ENCODE measurements at regions of chr22 and their contacts with region 1.

Region 1: GRCh38 chr22:19730655-19731360 is 7.5 kb downstream of the GP1BB start:
- DNase-seq: peak; percentile 90

Region 2: GRCh38 chr22:19713650-19714311 is 17.0 kb before region 1 on chr22:
- intact Hi-C with region 1: no loop called
- DNase-seq: no peak

Region 3: GRCh38 chr22:19854778-19855503 is 124.1 kb after region 1 on chr22 and contains the starts of genes GNB1L and RTL10:
- intact Hi-C with region 1: loop called (anchors 5 kb)
- DNase-seq: peak; percentile 99
- total RNA-seq, gene GNB1L: 2.0 TPM
- total RNA-seq, gene RTL10: 6.3 TPM

Region 4: GRCh38 chr22:19909350-19910179 is 178.8 kb after region 1 on chr22:
- intact Hi-C with region 1: loop called (anchors 1 kb)
- DNase-seq: peak; percentile 89